ENCODE measurements at regions of chr20 and their contacts with region 1.

Region 1: GRCh38 chr20:57383447-57384347 is 7.5 kb upstream of the RBM38 start:
- DNase-seq: no peak
- H3K4me3 ChIP-seq: no peak overlapping the region
- H3K27ac ChIP-seq: no peak overlapping the region
- H3K4me1 ChIP-seq: no peaks in the 10 kb centered on the region
- H3K27me3 ChIP-seq: no peaks in the 10 kb centered on the region
- CTCF ChIP-seq: no peak
- POLR2A ChIP-seq: no peak

Region 2: DNA sequence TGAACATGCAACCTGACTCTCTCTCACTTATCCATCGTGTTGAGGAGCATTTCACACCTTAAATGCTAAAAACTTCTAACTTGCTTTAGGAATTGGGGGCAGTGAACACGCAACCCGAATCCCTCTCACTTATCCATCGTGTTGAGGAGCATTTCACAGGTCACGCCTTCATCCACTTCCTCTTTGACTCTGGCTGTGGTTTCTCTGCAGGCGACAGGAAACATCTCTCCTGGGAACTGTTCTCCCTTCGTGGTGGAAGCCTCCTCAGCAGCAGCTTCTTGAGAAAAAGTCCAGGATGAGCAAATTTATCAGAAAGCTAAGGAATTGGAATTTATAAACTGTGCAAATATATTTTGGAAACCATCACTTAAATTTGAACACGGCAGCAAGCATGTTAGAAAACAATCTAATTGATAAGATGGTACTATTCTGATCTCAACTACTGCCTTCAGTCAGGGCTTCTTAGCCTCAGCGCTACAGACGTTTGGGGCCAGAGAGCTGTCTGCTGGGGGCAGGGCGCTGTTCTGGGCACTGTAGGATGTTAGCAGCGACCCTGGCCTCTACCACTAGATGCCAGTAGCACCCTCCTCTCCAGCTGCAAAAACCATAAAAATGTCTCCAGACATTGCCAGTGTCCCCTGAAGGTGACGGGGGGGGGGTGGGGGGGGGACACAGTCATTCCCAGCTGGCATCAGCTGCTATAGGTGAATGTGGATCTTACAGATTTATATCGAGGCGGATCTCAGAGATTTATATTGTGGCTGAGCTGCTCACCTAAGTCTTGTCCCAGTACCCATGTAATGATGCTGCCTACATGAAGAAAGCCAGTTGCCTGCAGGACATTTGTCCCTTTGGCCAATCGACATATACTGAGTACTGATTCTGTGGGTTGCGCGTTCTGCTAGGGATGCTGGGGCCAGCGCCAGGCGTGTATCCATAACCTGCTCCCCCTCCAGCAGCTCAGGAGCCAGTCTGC is 115.0 kb after region 1 on chr20:
- intact Hi-C with region 1: loop called (anchors 5 kb)
- DNase-seq: no peak
- H3K4me3 ChIP-seq: no peak overlapping the region
- H3K27ac ChIP-seq: no peak overlapping the region
- H3K4me1 ChIP-seq: no peaks in the 10 kb centered on the region
- H3K27me3 ChIP-seq: no peaks in the 10 kb centered on the region
- CTCF ChIP-seq: no peak
- POLR2A ChIP-seq: no peak